ENCODE measurements at regions of chr17 and their contacts with region 1.

Region 1: DNA sequence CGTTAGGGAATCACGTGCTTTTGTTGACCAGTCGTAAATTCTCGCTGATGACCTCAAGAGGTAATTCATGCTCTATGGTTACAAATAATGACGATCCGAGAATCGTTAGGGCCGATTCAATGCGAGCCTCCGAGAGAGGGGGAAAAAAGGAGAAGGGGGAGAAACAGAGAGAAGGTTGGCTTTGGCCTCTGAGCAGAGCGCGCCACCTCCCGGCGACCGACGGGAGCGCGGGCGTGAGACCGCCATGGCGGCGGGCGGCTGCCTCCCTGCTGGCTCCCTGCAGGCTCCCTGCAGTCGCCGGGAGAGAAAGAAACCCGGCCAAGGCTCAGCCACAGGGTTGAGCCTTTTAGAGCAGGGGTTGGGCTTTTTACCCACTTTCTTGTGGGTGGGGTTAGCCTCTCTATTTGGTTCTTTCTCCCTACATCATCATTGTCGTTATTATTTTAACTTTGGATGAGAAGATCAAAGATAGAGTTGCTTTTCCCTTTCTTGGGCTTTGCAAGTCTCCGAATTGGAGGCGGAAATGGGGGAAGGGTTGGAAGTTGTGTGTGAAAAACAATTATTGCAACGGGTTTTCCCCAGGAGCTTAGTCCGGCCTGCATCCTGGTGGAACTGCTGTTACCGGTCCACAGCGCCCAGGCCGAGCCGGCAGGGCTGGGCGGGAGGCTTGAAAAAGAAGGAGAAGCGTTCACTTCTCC is 410 bp upstream of the HOXB5 start:
- DNase-seq: peak; percentile 94

Region 2: GRCh38 chr17:48335858-48336500 is 258.0 kb before region 1 on chr17:
- intact Hi-C with region 1: loop called in 1 of 2 experiments (anchors 5 kb)
- DNase-seq: no peak

Region 3: GRCh38 chr17:48351831-48352332 is 242.1 kb before region 1 on chr17:
- intact Hi-C with region 1: loop called (anchors 5 to 10 kb)
- DNase-seq: no peak

Region 4: GRCh38 chr17:48492401-48493298 is 101.3 kb before region 1 on chr17:
- intact Hi-C with region 1: loop called in 1 of 2 experiments (anchors 1 kb)
- DNase-seq: peak; percentile 90

Region 5: DNA sequence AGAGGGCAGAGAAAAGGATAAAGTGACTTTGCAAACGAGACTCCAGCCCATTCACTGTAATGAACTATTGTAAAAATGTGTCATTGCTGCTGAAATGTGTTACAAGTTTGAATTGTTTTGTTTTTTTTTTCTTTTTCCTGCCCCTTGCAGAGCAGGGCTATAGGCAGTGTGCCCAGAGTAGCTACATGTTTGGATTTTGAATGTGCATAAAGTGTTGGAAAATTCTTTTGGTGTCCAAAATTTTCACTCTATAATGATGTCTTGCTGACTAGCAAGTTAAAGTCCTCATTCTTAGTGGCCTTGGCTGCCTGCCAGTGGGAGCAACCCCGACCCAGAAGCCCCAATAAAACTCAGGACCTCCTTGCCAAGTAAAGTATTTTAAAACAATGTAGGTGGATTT is 469.7 kb after region 1 on chr17:
- intact Hi-C with region 1: no loop called
- DNase-seq: no peak

Measured in posterior vena cava (tissue), 2 donors.